Gastrocnemius medialis (tissue), 4 donors: ENCODE measurements at regions of chr11 and their contacts with region 1.

Region 1: DNA sequence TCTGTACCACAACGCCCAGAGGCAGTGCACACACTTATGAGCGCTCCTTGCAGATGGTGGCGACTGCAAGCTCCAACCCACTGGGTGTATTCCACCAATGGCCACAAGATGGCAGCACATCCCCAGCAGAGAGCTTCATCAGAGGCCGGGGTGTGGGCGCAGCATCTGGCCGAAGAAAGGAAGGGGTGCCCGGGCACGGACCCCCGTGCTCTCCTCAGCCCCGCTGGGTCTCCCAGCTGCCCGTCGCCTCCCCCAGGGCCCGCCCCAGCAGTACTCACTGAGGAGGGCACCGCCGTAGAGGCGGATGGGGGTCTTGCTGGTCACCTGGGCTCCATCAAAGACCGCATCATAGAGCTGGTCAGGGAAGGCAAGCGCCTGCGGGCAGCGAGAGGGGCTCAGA is 14.2 kb downstream of the TP53I11 start:
- DNase-seq: peak; percentile 39 to 70
- ATAC-seq: peak; percentile 77 to 81
- H3K4me3 ChIP-seq: no peak overlapping the region
- H3K27ac ChIP-seq: no peak overlapping the region
- H3K4me1 ChIP-seq: peaks cover 0 to 8% of the 10 kb centered on the region in 2 donors
- H3K27me3 ChIP-seq: no peaks in the 10 kb centered on the region
- CTCF ChIP-seq: peak; percentile 88 to 98 (median 95)
- POLR2A ChIP-seq: no peak

Region 2: DNA sequence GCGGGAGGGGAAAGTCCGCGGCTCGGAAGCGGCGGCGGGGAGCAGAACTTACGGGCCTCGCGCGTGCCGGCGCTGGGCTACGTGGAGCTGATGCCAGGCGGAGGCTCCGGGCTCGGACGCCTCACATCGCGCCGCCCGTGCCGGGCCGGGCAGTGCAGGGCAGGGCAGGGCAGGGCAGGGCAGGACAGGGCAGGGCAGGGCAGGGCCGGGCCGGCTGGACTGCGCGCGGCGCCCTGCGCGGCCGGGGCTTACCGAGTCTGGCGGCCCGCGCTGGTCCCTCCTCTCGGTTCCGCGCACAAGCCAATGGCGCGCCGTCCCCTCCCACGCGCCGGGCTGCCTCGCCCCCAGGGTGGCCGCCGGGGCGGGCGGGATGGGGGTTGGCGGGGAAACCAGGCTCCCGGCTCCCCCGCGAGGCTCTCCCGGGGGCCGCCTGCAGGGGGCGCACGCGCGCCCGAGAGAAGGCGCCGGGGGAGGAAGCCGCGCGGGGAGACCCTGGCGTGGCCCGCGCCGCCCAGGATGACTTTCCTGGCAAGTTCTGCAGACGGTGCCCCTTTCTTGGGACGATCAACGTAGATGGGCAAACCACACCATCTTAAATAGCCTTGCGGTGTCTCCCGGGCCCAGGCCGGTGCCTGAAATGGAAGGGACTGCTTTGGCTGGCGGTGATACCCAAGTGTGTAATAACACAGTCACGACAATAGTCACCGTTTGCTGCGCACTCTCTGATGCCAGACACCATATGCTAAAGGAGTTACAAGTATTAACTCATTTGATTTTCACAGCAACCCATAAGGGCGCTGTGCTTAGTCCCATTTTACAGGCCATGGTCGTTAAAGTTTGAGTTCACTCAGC is 14.3 kb after region 1 on chr11 and contains the start of gene TP53I11:
- in situ Hi-C with region 1: no loop called
- intact Hi-C with region 1: no loop called
- DNase-seq: peak; percentile 37 to 67
- ATAC-seq: peak; percentile 54 to 66
- H3K4me3 ChIP-seq: peak within 1 kb of the TSS; percentile 55 to 85 (median 76)
- H3K27ac ChIP-seq: peak within 1 kb of the TSS; percentile 72 to 82 (median 78)
- H3K4me1 ChIP-seq: peaks cover 8 to 17% of the 10 kb centered on the region in 2 donors
- H3K27me3 ChIP-seq: no peaks in the 10 kb centered on the region
- CTCF ChIP-seq: peak; percentile 26 to 74 (median 68)
- POLR2A ChIP-seq: peak; percentile 63 to 81
- total RNA-seq, gene TP53I11: 5.4 to 17.2 (median 12.8) TPM

Region 3: GRCh38 chr11:45285930-45286632 is 349.6 kb after region 1 on chr11 and contains the start of gene SYT13:
- in situ Hi-C with region 1: loop called in 2 of 4 experiments (anchors 25 kb)
- intact Hi-C with region 1: no loop called
- DNase-seq: no peak
- ATAC-seq: no peak
- H3K4me3 ChIP-seq: peak within 1 kb of the TSS in 1 of 4 donors; percentile 21
- H3K27ac ChIP-seq: no peak within 1 kb of the TSS
- H3K4me1 ChIP-seq: no peaks in the 10 kb centered on the region
- H3K27me3 ChIP-seq: peaks cover 42 to 60% (median 49%) of the 10 kb centered on the region in 3 donors
- CTCF ChIP-seq: no peak
- POLR2A ChIP-seq: no peak
- total RNA-seq, gene SYT13: 0.15 TPM in 1 of 4 donors, not detected in the others

Region 4: GRCh38 chr11:45322891-45323600 is 386.5 kb after region 1 on chr11:
- in situ Hi-C with region 1: loop called in 1 of 4 experiments (anchors 10 kb)
- intact Hi-C with region 1: no loop called
- DNase-seq: no peak
- ATAC-seq: no peak
- H3K4me3 ChIP-seq: no peak overlapping the region
- H3K27ac ChIP-seq: no peak overlapping the region
- H3K4me1 ChIP-seq: peaks cover 0 to 3% of the 10 kb centered on the region in 2 donors
- H3K27me3 ChIP-seq: peaks cover 0 to 2% (median 0%) of the 10 kb centered on the region in 3 donors
- CTCF ChIP-seq: no peak
- POLR2A ChIP-seq: no peak

Region 5: DNA sequence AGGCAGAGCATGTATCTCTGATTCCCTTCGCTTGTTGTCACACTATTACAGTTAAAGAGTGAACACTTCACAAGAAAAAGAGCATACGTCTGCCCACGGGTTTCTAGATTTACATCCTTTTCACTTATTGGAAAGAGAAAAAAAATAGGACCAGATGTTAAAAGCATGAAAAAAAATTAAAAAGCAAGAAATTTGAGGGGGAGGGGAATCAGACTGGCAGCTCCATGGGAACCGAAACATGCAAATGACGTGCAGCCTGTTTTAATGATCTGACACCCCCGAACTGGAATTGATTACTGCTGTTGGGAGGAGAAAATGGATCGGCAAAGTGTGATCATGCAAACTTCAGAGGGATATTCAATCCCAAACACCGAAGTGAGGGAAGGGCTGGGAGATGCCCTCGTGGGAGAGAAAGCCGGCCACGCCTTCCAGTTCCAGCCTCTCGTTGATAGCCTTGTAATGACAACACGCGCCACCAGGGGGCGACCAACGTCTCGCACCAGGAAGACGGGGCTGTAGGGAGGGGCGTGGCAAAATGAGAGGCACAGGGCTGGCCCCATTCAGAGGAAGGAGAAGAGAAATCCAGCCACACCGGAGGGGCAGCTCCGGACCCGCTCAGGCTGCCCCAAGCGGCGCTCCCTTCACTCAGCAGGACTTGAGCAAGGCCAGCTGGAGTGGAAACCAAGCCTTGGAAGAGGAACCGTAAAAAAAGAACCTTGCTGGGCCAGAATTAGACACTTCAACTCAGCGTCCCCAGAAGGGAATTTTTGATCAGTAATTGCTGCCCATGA is 403.4 kb after region 1 on chr11:
- in situ Hi-C with region 1: no loop called
- intact Hi-C with region 1: loop called (anchors 10 kb)
- DNase-seq: peak; percentile 70 to 86
- ATAC-seq: peak; percentile 96 to 99
- H3K4me3 ChIP-seq: peak overlapping the region; percentile 1 to 34 (median 19)
- H3K27ac ChIP-seq: no peak overlapping the region
- H3K4me1 ChIP-seq: peaks cover 10 to 14% of the 10 kb centered on the region in 2 donors
- H3K27me3 ChIP-seq: peaks cover 0 to 6% (median 0%) of the 10 kb centered on the region in 3 donors
- CTCF ChIP-seq: peak; percentile 86 to 90 (median 87)
- POLR2A ChIP-seq: no peak